ENCODE measurements at regions of chr3 and their contacts with region 1.

Region 1: GRCh38 chr3:151439652-151440129 is 21.2 kb downstream of the IGSF10 start:
- DNase-seq: no peak
- ATAC-seq: peak; percentile 85

Region 2: DNA sequence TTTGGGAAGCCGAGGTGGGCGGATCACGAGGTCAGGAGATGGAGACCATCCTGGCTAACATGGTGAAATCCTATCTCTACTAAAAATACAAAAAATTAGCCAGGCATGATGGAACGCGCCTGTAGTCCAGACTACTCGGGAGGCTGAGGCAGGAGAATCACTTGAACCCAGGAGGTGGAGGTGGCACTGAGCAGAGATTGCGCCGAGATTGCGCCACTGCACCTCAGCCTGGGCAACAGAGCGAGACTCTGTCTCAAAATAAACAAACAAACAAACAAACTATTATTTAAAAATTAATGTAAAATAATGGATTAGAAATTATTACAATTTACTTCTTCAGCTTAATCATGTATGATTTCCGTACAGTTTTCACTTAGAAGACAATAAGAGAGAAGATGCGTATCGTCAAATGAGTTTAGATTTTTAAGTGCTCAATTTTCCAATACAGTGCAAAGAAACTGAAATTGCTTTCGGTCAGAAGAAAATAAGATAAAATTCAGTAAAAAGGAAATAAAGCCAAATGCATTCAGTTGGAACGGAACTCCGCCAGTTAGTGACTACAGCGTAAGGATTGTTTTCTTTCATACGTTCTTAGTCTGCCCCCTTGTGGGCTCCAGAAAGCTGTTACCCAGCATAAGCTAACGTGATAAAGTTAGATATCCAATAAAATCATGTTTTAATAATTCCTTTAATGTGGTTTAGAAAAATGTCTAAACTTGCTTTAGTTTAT is 399.1 kb after region 1 on chr3:
- intact Hi-C with region 1: loop called in 1 of 2 experiments (anchors 2 kb)
- DNase-seq: peak in 1 of 2 donors; percentile 43
- ATAC-seq: peak; percentile 89

Region 3: DNA sequence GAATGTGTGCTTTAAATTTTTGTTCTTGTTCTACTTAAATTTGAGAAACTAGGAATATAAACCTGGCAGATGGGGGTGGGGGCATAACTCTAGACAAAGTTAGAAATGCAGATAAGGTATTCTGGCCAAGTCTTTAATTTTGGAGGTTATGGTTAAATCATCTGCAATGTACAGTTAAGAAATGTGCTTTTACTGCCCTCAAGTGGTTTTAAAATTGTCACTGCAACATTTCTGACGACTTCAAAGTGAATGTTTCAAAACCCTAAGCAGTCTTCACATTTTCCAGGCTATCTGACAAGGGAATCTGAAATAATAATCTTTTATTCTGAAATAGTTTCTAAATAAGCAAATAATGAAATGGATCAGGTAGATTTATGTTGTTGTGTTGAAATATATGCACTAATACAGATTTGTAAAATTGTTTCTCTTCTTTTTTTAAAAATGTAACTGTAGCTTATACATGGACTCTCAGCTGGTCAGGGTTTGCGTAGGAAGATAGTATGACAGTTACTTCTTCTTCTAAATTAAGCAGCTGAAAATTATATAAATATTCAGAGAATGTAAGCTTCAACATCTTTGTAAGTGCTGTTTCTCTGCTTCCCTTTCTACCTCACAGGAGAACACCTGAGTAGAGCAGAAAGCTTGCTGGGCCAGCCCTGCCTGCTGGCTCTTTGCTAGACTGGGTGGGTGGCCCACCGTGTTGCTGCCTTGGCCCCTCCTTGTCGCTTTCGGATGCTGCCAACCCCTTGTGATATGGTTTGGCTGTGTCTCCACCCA is 478.8 kb after region 1 on chr3:
- intact Hi-C with region 1: loop called in 1 of 2 experiments (anchors 5 kb)
- DNase-seq: no peak
- ATAC-seq: peak; percentile 74

Region 4: GRCh38 chr3:152834776-152835600 is 1395.3 kb after region 1 on chr3 and contains the start of gene P2RY1:
- intact Hi-C with region 1: no loop called
- DNase-seq: peak; percentile 83
- ATAC-seq: peak; percentile 86
- total RNA-seq, gene P2RY1: 15.6 to 23.8 TPM